CD8-positive, alpha-beta T cell (primary cell): ENCODE measurements at regions of chr22 and their contacts with region 1.

Region 1: GRCh38 chr22:38569972-38570778 is at the start of gene DMC1:
- DNase-seq: peak; percentile 89 to 99 (median 97)
- ATAC-seq: peak; percentile 97
- H3K4me3 ChIP-seq: peak within 1 kb of the TSS; percentile 64 to 74
- H3K4me3 Mint-ChIP-seq: peak within 1 kb of the TSS; percentile 87
- H3K27ac ChIP-seq: peak within 1 kb of the TSS; percentile 42 to 43
- H3K27ac Mint-ChIP-seq: peak within 1 kb of the TSS; percentile 78
- H3K4me1 ChIP-seq: peaks cover 15% of the 10 kb centered on the region
- H3K4me1 Mint-ChIP-seq: peaks cover 17% of the 10 kb centered on the region
- H3K27me3 ChIP-seq: no peaks in the 10 kb centered on the region
- H3K27me3 Mint-ChIP-seq: no peaks in the 10 kb centered on the region
- CTCF ChIP-seq: no peak
- total RNA-seq, gene DMC1: 0.27 TPM in 1 of 2 experiments, not detected in the other

Region 2: GRCh38 chr22:38056969-38057891 is 512.9 kb before region 1 on chr22 and contains the start of gene PICK1:
- CTCF ChIA-PET with region 1: interaction called, 8 read pairs
- POLR2A ChIA-PET with region 1: no interaction called
- intact Hi-C with region 1: loop called (anchors 1 to 2 kb)
- DNase-seq: peak; percentile 56 to 89 (median 77)
- ATAC-seq: peak; percentile 80
- H3K4me3 ChIP-seq: peak within 1 kb of the TSS; percentile 83 to 97
- H3K4me3 Mint-ChIP-seq: peak within 1 kb of the TSS; percentile 98
- H3K27ac ChIP-seq: peak within 1 kb of the TSS; percentile 79 to 91
- H3K27ac Mint-ChIP-seq: peak within 1 kb of the TSS; percentile 98
- H3K4me1 ChIP-seq: peaks cover 15% of the 10 kb centered on the region
- H3K4me1 Mint-ChIP-seq: peaks cover 19% of the 10 kb centered on the region
- H3K27me3 ChIP-seq: no peaks in the 10 kb centered on the region
- H3K27me3 Mint-ChIP-seq: no peaks in the 10 kb centered on the region
- CTCF ChIP-seq: no peak
- total RNA-seq, gene PICK1: 23.1 to 24.8 TPM

Region 3: DNA sequence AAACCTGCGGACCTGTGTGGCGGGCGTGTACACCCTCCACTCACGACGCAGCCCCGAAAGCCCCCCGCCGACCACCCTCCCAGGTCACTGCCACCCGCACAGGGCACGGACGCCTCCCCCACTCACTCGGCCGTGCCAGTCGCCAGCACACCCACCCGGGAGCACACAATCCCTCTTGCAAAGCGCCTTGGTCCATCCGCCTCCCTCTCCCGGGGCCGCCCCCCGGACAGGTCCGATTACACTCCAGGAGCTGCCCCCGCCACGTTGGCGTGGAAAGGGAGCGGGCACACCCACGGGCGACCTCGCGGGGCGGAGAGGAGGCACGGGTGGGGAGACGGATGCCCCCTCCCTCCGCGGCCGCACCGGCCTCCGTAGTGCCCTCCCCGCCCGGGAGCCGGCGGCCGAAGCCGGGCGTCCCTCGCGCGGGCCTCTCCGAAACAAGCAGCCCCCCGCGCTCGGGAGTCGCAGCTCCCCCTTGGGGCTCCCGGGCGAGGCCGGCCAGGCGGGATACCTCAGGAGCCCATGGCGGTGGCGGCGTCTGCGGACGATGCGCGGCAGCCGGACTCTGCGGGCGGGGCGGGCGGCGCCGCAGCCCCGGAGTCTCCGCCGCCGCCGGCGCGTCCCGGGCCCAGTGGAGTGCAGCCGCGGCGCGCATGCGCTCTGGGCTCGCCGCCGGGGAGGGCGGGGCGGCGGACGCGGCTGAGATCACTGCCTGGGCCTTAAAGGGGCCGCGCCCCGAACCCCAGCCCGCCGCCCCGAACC is 297.6 kb before region 1 on chr22 and contains the start of gene TMEM184B:
- CTCF ChIA-PET with region 1: no interaction called
- POLR2A ChIA-PET with region 1: no interaction called
- intact Hi-C with region 1: loop called in 1 of 2 experiments (anchors 1 kb)
- DNase-seq: peak; percentile 62 to 93 (median 78)
- ATAC-seq: peak; percentile 94
- H3K4me3 ChIP-seq: peak within 1 kb of the TSS; percentile 70 to 77
- H3K4me3 Mint-ChIP-seq: peak within 1 kb of the TSS; percentile 92
- H3K27ac ChIP-seq: peak within 1 kb of the TSS; percentile 59 to 93
- H3K27ac Mint-ChIP-seq: peak within 1 kb of the TSS; percentile 95
- H3K4me1 ChIP-seq: peaks cover 31% of the 10 kb centered on the region
- H3K4me1 Mint-ChIP-seq: peaks cover 50% of the 10 kb centered on the region
- H3K27me3 ChIP-seq: no peaks in the 10 kb centered on the region
- H3K27me3 Mint-ChIP-seq: peaks cover 3% of the 10 kb centered on the region
- CTCF ChIP-seq: no peak
- total RNA-seq, gene TMEM184B: 53.0 TPM

Region 4: DNA sequence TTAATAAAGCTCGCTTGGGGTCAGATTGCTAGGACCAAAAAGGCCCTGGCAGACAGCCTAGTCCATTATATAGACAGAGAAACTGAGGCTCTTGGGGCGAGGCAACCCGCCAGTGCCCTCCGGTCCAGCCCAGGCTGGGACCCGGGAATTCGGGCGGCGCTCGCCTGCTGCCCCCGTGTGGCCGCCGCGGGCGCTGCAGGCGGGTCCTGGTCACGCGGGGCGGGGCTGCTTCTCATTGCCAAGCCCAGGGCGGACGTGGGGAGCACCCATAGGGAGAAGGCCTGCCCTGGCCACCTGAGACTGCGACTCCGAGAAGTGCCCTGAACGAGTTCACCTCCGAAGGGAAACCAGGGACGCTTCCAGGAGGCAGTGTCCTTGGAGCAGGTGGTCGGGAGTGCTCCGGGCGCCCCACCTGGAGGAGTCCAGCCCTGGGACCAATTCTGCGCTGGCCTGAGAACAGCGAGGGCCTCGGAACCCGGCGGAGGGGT is 217.0 kb before region 1 on chr22:
- CTCF ChIA-PET with region 1: no interaction called
- POLR2A ChIA-PET with region 1: no interaction called
- intact Hi-C with region 1: loop called in 1 of 2 experiments (anchors 5 kb)
- DNase-seq: peak; percentile 46 to 87 (median 69)
- ATAC-seq: peak; percentile 98
- H3K4me3 ChIP-seq: no peak overlapping the region
- H3K4me3 Mint-ChIP-seq: no peak overlapping the region
- H3K27ac ChIP-seq: no peak overlapping the region
- H3K27ac Mint-ChIP-seq: no peak overlapping the region
- H3K4me1 ChIP-seq: peaks cover 6% of the 10 kb centered on the region
- H3K4me1 Mint-ChIP-seq: no peaks in the 10 kb centered on the region
- H3K27me3 ChIP-seq: no peaks in the 10 kb centered on the region
- H3K27me3 Mint-ChIP-seq: no peaks in the 10 kb centered on the region
- CTCF ChIP-seq: peak; percentile 99

Region 5: GRCh38 chr22:38412435-38413084 is 157.6 kb before region 1 on chr22:
- CTCF ChIA-PET with region 1: interaction called, 5 read pairs
- POLR2A ChIA-PET with region 1: no interaction called
- intact Hi-C with region 1: loop called in 1 of 2 experiments (anchors 1 kb)
- DNase-seq: peak in 7 of 9 experiments; percentile 19 to 55 (median 48)
- ATAC-seq: peak; percentile 79
- H3K4me3 ChIP-seq: no peak overlapping the region
- H3K4me3 Mint-ChIP-seq: no peak overlapping the region
- H3K27ac ChIP-seq: no peak overlapping the region
- H3K27ac Mint-ChIP-seq: no peak overlapping the region
- H3K4me1 ChIP-seq: peaks cover 8% of the 10 kb centered on the region
- H3K4me1 Mint-ChIP-seq: no peaks in the 10 kb centered on the region
- H3K27me3 ChIP-seq: no peaks in the 10 kb centered on the region
- H3K27me3 Mint-ChIP-seq: peaks cover 5% of the 10 kb centered on the region
- CTCF ChIP-seq: peak; percentile 89

Region 6: DNA sequence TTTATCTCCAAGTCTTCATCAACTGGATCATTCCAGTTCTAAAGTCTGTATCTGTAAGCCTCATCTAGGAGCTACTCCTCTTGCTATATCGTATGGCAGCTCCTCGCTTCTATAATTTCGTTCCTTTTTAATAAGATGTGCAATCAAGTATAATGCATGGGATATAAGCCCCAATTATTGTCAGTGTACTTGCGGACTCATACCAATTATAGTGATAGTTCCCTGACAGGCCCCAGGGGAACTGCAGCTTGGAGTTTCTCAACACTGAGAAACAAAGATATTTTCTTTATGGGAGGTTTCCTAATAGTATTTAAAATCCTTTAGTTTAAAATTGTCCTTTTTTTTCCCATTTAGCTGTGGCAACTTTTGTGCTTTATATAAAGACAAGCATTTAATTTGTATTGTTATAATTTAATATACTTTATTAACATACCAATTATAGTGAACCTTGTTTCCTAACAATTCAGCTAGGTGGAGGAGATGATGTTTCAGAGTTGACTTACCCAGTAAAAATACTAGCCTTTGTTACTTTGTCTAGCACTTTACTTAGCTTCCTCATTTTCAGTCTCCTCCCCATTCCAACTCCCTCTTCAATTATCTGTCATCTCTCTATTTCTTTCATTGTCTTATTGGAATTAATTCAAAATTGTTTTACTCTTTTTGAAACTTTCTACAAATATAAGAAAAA is 38.8 kb before region 1 on chr22:
- CTCF ChIA-PET with region 1: no interaction called
- POLR2A ChIA-PET with region 1: no interaction called
- intact Hi-C with region 1: loop called in 1 of 2 experiments (anchors 1 kb)
- DNase-seq: no peak
- ATAC-seq: peak; percentile 56
- H3K4me3 ChIP-seq: no peak overlapping the region
- H3K4me3 Mint-ChIP-seq: peak overlapping the region; percentile 23
- H3K27ac ChIP-seq: peak overlapping the region; percentile 7 to 44
- H3K27ac Mint-ChIP-seq: peak overlapping the region; percentile 83
- H3K4me1 ChIP-seq: peaks cover 19% of the 10 kb centered on the region
- H3K4me1 Mint-ChIP-seq: peaks cover 14% of the 10 kb centered on the region
- H3K27me3 ChIP-seq: no peaks in the 10 kb centered on the region
- H3K27me3 Mint-ChIP-seq: no peaks in the 10 kb centered on the region
- CTCF ChIP-seq: no peak

Region 7: DNA sequence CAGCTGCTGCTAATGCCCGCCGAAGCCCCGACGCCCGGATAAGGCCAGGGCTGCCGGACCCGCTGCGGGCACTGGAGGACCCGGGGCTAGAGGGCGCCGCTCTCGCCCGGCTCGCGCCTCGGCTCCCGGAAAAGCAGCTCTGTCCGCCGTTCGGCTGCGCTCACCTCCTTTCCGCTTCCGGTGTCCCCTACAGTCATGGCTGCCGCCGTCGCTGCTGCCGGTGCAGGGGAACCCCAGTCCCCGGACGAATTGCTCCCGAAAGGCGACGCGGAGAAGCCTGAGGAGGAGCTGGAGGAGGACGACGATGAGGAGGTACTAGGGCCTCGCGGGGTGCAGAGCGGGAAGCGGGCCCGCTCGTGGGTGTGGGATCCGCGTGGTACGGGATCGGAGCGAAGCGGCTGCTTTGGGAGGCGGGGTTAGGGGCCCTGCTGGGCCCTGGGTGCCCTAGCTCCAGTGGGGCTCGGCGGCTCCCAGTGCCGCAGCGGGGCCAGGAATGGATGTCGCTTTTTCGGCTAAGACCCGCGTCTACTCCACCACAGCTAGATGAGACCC is 111.7 kb after region 1 on chr22 and contains the start of gene TOMM22:
- CTCF ChIA-PET with region 1: no interaction called
- POLR2A ChIA-PET with region 1: interaction called, 3 read pairs
- intact Hi-C with region 1: loop called in 1 of 2 experiments (anchors 1 kb)
- DNase-seq: peak; percentile 60 to 92 (median 84)
- ATAC-seq: peak; percentile 92
- H3K4me3 ChIP-seq: peak within 1 kb of the TSS; percentile 92 to 95
- H3K4me3 Mint-ChIP-seq: peak within 1 kb of the TSS; percentile 99
- H3K27ac ChIP-seq: peak within 1 kb of the TSS; percentile 84 to 87
- H3K27ac Mint-ChIP-seq: peak within 1 kb of the TSS; percentile 99
- H3K4me1 ChIP-seq: peaks cover 13% of the 10 kb centered on the region
- H3K4me1 Mint-ChIP-seq: peaks cover 19% of the 10 kb centered on the region
- H3K27me3 ChIP-seq: no peaks in the 10 kb centered on the region
- H3K27me3 Mint-ChIP-seq: no peaks in the 10 kb centered on the region
- CTCF ChIP-seq: peak; percentile 37
- total RNA-seq, gene TOMM22: 75.2 to 75.4 TPM

Region 8: GRCh38 chr22:38981992-38982927 is 412.1 kb after region 1 on chr22 and contains the start of gene APOBEC3B:
- CTCF ChIA-PET with region 1: no interaction called
- POLR2A ChIA-PET with region 1: no interaction called
- intact Hi-C with region 1: no loop called
- DNase-seq: peak; percentile 10 to 84 (median 69)
- ATAC-seq: peak; percentile 63
- H3K4me3 ChIP-seq: peak within 1 kb of the TSS; percentile 41 to 48
- H3K4me3 Mint-ChIP-seq: peak within 1 kb of the TSS; percentile 84
- H3K27ac ChIP-seq: peak within 1 kb of the TSS in 1 of 2 experiments; percentile 19
- H3K27ac Mint-ChIP-seq: no peak within 1 kb of the TSS
- H3K4me1 ChIP-seq: peaks cover 18% of the 10 kb centered on the region
- H3K4me1 Mint-ChIP-seq: peaks cover 28% of the 10 kb centered on the region
- H3K27me3 ChIP-seq: peaks cover 0 to 7% of the 10 kb centered on the region in 2 experiments
- H3K27me3 Mint-ChIP-seq: no peaks in the 10 kb centered on the region
- CTCF ChIP-seq: no peak
- total RNA-seq, gene APOBEC3B: 0.41 TPM in 1 of 2 experiments, not detected in the other

Region 9: DNA sequence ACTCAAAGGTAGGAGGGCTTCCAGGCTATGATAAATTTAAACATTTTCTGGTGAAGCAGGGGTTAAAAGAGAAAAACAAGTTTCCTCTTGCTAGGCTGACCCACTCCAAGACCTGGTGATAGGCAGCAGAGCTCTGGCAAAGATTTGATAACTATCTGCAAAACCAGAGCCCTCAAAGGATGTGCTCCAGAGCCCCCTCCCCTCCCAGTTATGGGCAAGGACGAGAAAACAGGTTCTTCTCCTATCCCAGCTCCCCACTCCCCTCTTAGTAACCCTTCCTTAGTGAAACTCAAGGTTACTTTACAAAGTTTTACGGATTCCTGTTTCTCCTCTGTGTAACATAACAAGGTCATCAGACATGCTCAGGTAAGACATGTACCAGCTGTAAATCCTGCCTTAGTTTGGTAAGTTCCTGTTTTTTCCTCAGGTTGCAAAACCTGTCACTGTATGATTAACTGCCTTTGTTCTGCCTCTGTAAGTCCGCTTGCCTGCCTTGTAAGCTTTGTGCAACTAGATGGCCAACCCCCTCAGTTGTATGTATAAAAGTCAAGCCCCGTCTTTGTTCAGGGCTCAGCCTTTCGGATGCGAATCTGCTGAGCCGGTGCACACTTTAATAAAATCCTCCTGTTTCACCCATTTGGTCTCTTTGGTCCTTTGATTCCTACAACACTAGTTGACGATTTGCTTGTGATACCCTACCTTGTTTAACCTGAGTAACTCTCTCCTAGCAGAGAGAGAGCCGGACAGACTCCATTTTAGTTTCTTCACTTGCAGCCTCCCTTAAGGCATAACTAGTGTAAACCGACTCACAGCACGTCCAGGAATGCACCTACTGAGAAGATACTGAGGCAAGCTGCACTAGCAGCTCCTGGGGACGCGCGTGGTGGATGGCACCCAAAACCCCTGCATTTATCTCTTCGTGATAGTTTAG is 540.7 kb after region 1 on chr22:
- CTCF ChIA-PET with region 1: no interaction called
- POLR2A ChIA-PET with region 1: no interaction called
- intact Hi-C with region 1: no loop called
- DNase-seq: no peak
- ATAC-seq: no peak
- H3K4me3 ChIP-seq: no peak overlapping the region
- H3K4me3 Mint-ChIP-seq: no peak overlapping the region
- H3K27ac ChIP-seq: no peak overlapping the region
- H3K27ac Mint-ChIP-seq: no peak overlapping the region
- H3K4me1 ChIP-seq: no peaks in the 10 kb centered on the region
- H3K4me1 Mint-ChIP-seq: peaks cover 7% of the 10 kb centered on the region
- H3K27me3 ChIP-seq: no peaks in the 10 kb centered on the region
- H3K27me3 Mint-ChIP-seq: no peaks in the 10 kb centered on the region
- CTCF ChIP-seq: no peak